ENCODE measurements at regions of chr2 and their contacts with region 1.

Region 1: DNA sequence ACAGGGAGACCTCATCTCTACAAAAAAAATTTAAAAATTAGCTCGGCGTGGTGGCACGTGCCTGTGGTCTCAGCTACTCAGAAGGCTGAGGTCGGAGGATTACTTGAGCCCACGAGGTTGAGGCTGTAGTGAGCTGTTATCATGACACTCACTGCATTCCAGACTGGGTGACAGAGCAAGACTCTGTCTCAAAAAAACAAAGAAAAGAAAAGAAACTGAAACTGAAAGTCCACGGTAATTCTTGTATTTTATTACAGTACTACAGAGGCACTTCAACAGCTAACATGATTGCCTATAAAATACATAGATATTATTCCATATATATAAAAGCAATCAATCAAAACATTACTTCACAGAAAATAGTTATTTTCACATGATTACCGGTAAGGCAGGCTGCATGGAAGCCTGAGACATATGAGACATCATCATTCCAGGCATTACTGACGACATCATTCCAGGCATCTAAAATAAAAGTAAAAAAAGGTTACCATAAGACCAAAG is 23.1 kb downstream of the PRPF40A start:
- DNase-seq: peak in 5 of 9 experiments; percentile 7 to 63 (median 24)
- ATAC-seq: peak; percentile 80
- H3K4me3 ChIP-seq: peak overlapping the region in 1 of 2 experiments; percentile 46
- H3K4me3 Mint-ChIP-seq: peak overlapping the region; percentile 80
- H3K27ac ChIP-seq: peak overlapping the region; percentile 4 to 75
- H3K27ac Mint-ChIP-seq: peak overlapping the region; percentile 89
- H3K4me1 ChIP-seq: peaks cover 9% of the 10 kb centered on the region
- H3K4me1 Mint-ChIP-seq: peaks cover 49% of the 10 kb centered on the region
- H3K27me3 ChIP-seq: no peaks in the 10 kb centered on the region
- H3K27me3 Mint-ChIP-seq: no peaks in the 10 kb centered on the region
- CTCF ChIP-seq: no peak

Region 2: DNA sequence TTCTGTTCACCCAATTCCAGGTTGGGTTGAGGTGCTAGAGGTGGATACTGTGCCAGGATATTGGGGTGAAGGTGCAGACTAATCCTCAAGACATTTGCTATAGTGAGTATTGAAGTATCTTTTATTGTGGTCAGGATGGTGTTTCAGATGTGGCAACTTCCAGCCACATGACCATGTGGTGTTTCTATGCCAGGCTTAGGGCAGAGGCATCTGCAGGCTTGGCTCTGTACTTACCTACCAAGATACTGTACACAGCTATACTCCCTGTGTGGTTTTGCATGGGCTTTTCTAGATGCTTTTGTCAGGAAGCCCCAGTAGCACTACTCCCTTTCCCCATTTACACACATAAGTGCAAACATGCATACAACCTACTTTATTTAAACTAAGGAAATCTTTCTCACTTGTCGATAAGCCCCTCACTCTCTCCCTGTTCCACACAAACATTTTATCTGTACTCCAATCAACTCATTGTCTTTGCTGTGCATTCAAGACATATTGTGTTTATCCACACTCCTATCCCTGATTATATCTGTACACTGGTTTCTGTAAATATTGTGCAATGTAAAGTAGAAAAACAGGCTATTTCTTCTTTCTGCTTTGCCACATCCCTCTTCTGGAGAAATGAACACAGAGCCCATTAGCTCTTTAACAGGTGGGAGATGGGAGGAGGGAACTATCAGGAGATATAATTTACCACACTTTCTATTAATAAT is 36.5 kb after region 1 on chr2:
- CTCF ChIA-PET with region 1: no interaction called
- POLR2A ChIA-PET with region 1: interaction called, 5 read pairs
- intact Hi-C with region 1: loop called in 1 of 2 experiments (anchors 5 kb)
- DNase-seq: peak; percentile 27 to 86 (median 42)
- ATAC-seq: peak; percentile 89
- H3K4me3 ChIP-seq: no peak overlapping the region
- H3K4me3 Mint-ChIP-seq: no peak overlapping the region
- H3K27ac ChIP-seq: no peak overlapping the region
- H3K27ac Mint-ChIP-seq: no peak overlapping the region
- H3K4me1 ChIP-seq: peaks cover 18% of the 10 kb centered on the region
- H3K4me1 Mint-ChIP-seq: peaks cover 27% of the 10 kb centered on the region
- H3K27me3 ChIP-seq: no peaks in the 10 kb centered on the region
- H3K27me3 Mint-ChIP-seq: no peaks in the 10 kb centered on the region
- CTCF ChIP-seq: no peak

Measured in CD8-positive, alpha-beta T cell (primary cell).